ENCODE measurements at regions of chr19 and their contacts with region 1.

Region 1: DNA sequence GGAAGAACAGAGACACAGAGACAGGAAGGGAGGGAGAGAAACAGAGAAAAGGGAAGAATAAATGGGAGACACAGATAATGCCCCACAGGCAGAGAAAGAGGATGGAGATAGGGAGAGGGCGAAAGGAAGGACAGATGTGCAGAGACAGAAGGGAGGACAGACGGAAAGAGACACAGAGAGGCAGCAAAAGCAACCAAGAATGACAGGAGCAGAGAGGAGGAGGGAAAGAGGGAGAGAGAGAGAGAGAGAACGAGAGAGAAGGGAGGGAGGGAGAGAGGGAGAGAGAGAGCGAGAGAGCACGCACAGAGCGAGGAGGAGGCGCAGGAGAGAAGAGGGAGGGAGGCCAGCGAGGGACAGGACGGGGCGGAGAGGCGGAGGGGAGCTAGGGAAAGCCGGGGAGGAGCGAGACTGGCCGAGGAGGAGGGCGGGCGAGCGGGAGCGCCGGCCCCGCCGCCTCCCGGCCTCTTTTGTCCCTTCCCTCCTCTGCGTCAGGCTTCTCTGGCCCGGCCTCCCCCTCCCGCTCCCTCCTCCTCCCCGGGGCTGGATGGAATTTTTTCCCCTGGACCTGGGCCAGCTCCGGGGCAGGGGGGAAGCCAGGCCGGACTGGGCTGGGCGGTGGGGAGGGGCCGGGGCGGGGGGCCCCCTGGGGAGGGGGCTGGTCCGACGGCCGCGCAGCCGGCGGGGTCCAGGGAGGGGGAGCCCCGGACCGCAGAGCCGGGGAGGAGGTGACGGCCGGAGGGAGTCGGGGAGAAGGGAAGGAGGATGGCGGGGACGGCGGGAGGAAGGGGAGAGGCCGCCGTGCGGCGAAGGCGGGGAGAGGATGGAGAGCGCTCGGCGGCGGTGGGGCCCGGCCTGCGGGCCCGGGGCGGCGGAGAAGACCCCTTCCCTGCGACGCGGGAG is 4.2 kb upstream of the SPACA6 start:
- DNase-seq: peak; percentile 50
- ATAC-seq: no peak
- H3K4me3 Mint-ChIP-seq: peak overlapping the region; percentile 90
- H3K27ac Mint-ChIP-seq: peak overlapping the region; percentile 49
- H3K4me1 Mint-ChIP-seq: peaks cover 15% of the 10 kb centered on the region
- H3K27me3 Mint-ChIP-seq: no peaks in the 10 kb centered on the region

Region 2: GRCh38 chr19:51367565-51368365 is 321.2 kb before region 1 on chr19:
- CTCF ChIA-PET with region 1: no interaction called
- POLR2A ChIA-PET with region 1: no interaction called
- intact Hi-C with region 1: loop called in 1 of 2 experiments (anchors 1 kb)
- DNase-seq: peak; percentile 99
- ATAC-seq: peak; percentile 83
- H3K4me3 Mint-ChIP-seq: peak overlapping the region; percentile 90
- H3K27ac Mint-ChIP-seq: peak overlapping the region; percentile 97
- H3K4me1 Mint-ChIP-seq: peaks cover 58% of the 10 kb centered on the region
- H3K27me3 Mint-ChIP-seq: no peaks in the 10 kb centered on the region

Region 3: DNA sequence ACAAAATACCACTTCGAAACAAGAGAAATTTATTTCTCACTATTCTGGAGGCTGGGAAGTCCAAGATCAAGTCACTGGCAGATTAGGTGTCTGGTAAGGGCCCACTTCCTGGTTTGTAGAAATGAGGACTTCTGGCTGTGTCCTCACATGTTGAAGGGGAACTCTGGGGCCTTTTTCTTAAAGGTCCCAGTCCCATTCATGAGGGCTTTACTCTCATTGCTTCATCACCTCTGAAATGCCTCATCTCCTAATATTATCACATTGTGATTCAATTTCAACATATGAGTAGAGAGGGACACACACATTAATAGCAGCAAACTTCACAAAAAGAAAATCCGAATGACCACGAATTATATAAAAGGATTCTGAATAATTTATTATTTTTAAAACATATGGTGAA is 20.7 kb before region 1 on chr19:
- CTCF ChIA-PET with region 1: interaction called, 77 read pairs
- POLR2A ChIA-PET with region 1: interaction called, 3 read pairs
- intact Hi-C with region 1: loop called in 1 of 2 experiments (anchors 2 kb)
- DNase-seq: no peak
- ATAC-seq: no peak
- H3K4me3 Mint-ChIP-seq: no peak overlapping the region
- H3K27ac Mint-ChIP-seq: no peak overlapping the region
- H3K4me1 Mint-ChIP-seq: peaks cover 11% of the 10 kb centered on the region
- H3K27me3 Mint-ChIP-seq: peaks cover 18% of the 10 kb centered on the region

Region 4: GRCh38 chr19:51799034-51799773 is 110.3 kb after region 1 on chr19:
- CTCF ChIA-PET with region 1: no interaction called
- POLR2A ChIA-PET with region 1: no interaction called
- intact Hi-C with region 1: no loop called
- DNase-seq: no peak
- ATAC-seq: no peak
- H3K4me3 Mint-ChIP-seq: no peak overlapping the region
- H3K27ac Mint-ChIP-seq: no peak overlapping the region
- H3K4me1 Mint-ChIP-seq: no peaks in the 10 kb centered on the region
- H3K27me3 Mint-ChIP-seq: peaks cover 18% of the 10 kb centered on the region

Region 5: DNA sequence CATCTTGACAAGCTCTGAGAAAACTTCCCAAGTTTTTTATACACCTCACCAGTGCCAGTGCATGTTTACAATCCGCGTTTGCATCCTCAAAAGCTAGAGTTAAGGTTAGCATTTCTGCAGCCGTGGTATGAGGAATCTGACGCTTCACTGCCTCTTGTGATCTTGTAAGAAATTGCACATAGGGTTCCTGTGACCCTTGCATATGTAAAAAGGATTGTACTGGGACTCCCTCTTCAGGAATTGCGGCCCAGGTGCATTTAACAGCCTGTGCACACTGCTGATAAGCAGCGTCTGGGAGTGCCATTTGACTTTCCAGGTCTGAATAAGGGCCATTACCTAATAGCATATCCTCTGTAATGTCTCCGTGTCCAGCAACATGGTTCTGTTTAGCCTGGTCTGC is 121.3 kb after region 1 on chr19:
- CTCF ChIA-PET with region 1: no interaction called
- POLR2A ChIA-PET with region 1: no interaction called
- intact Hi-C with region 1: no loop called
- DNase-seq: no peak
- ATAC-seq: no peak
- H3K4me3 Mint-ChIP-seq: no peak overlapping the region
- H3K27ac Mint-ChIP-seq: no peak overlapping the region
- H3K4me1 Mint-ChIP-seq: no peaks in the 10 kb centered on the region
- H3K27me3 Mint-ChIP-seq: no peaks in the 10 kb centered on the region

Region 6: GRCh38 chr19:52099497-52100138 is 410.7 kb after region 1 on chr19:
- CTCF ChIA-PET with region 1: no interaction called
- POLR2A ChIA-PET with region 1: no interaction called
- intact Hi-C with region 1: no loop called
- DNase-seq: no peak
- ATAC-seq: no peak
- H3K4me3 Mint-ChIP-seq: no peak overlapping the region
- H3K27ac Mint-ChIP-seq: no peak overlapping the region
- H3K4me1 Mint-ChIP-seq: peaks cover 6% of the 10 kb centered on the region
- H3K27me3 Mint-ChIP-seq: no peaks in the 10 kb centered on the region